ENCODE measurements at regions of chr5 and their contacts with region 1.

Region 1: GRCh38 chr5:180810210-180810958 is 7.8 kb upstream of the MGAT1 start:
- DNase-seq: peak; percentile 88
- ATAC-seq: peak; percentile 83
- H3K4me3 ChIP-seq: peak overlapping the region; percentile 97
- H3K27ac ChIP-seq: peak overlapping the region; percentile 95
- H3K4me1 ChIP-seq: peaks cover 31% of the 10 kb centered on the region
- H3K27me3 ChIP-seq: no peaks in the 10 kb centered on the region
- CTCF ChIP-seq: no peak
- EP300 ChIP-seq: no peak
- POLR2A ChIP-seq: peak; percentile 94
- RAD21 ChIP-seq: no peak

Region 2: GRCh38 chr5:179821581-179822432 is 988.6 kb before region 1 on chr5:
- CTCF ChIA-PET with region 1: no interaction called
- POLR2A ChIA-PET with region 1: no interaction called
- RAD21 ChIA-PET with region 1: no interaction called
- SMC1A ChIA-PET with region 1: no interaction called
- in situ Hi-C with region 1: loop called (anchors 25 kb)
- intact Hi-C with region 1: no loop called
- DNase-seq: no peak
- ATAC-seq: peak; percentile 74
- H3K4me3 ChIP-seq: peak overlapping the region; percentile 93
- H3K27ac ChIP-seq: peak overlapping the region; percentile 96
- H3K4me1 ChIP-seq: peaks cover 35% of the 10 kb centered on the region
- H3K27me3 ChIP-seq: no peaks in the 10 kb centered on the region
- CTCF ChIP-seq: no peak
- EP300 ChIP-seq: no peak
- POLR2A ChIP-seq: peak; percentile 73
- RAD21 ChIP-seq: no peak

Region 3: DNA sequence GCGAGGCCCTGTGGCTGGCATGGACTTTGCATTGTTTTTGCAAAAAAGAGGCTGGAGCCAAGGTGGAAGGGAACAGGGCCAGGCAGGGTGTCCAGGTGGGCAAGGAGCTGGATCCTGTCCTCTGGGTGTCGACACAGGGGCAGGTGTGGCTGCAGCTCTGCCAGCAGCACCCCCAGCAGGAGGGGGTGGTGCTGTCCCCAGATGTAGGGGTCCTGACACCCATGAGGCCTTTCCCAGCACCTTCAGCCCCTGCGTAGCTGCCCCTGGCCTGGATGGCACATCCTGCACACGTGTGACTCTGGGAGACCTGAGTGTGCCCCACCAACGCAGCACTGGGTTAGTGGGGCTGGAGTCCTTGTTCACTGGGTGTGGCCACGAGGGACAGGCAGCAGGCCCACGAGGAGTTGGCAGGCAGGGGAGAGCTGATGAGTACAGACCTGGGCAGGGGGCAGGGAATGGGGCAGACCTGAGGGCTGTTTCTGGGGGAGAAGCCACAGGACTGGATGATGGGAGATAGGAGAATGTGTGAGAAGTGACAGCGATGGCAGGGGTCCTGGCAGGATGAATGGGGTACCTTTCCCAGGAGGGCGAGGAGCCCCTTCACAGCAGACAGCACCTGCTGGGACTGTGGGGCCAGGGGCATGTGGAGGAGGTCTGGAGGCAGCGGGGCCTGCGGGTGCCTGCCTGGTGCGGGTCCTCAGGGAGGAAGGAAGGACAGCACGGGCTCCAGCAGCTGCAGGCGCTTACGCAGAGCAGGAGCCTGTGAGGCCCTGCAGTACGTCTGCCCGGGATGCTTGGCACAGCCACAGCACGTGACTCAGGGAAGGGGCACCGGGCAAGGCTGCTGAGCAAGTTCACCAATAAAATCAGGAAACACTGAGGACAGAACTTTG is 597.8 kb before region 1 on chr5:
- CTCF ChIA-PET with region 1: no interaction called
- POLR2A ChIA-PET with region 1: no interaction called
- RAD21 ChIA-PET with region 1: no interaction called
- SMC1A ChIA-PET with region 1: no interaction called
- in situ Hi-C with region 1: no loop called
- intact Hi-C with region 1: no loop called
- DNase-seq: no peak
- ATAC-seq: no peak
- H3K4me3 ChIP-seq: no peak overlapping the region
- H3K27ac ChIP-seq: no peak overlapping the region
- H3K4me1 ChIP-seq: no peaks in the 10 kb centered on the region
- H3K27me3 ChIP-seq: peaks cover 0 to 5% of the 10 kb centered on the region in 2 experiments; a peak in 2 of 4 replicates
- CTCF ChIP-seq: no peak
- EP300 ChIP-seq: no peak
- POLR2A ChIP-seq: no peak
- RAD21 ChIP-seq: no peak

Region 4: GRCh38 chr5:180776376-180776775 is 34.0 kb before region 1 on chr5:
- CTCF ChIA-PET with region 1: no interaction called
- POLR2A ChIA-PET with region 1: no interaction called
- RAD21 ChIA-PET with region 1: no interaction called
- SMC1A ChIA-PET with region 1: no interaction called
- in situ Hi-C with region 1: no loop called
- intact Hi-C with region 1: no loop called
- DNase-seq: no peak
- ATAC-seq: no peak
- H3K4me3 ChIP-seq: no peak overlapping the region
- H3K27ac ChIP-seq: no peak overlapping the region
- H3K4me1 ChIP-seq: no peaks in the 10 kb centered on the region
- H3K27me3 ChIP-seq: no peaks in the 10 kb centered on the region
- CTCF ChIP-seq: no peak
- EP300 ChIP-seq: no peak
- POLR2A ChIP-seq: no peak
- RAD21 ChIP-seq: no peak

Region 5: DNA sequence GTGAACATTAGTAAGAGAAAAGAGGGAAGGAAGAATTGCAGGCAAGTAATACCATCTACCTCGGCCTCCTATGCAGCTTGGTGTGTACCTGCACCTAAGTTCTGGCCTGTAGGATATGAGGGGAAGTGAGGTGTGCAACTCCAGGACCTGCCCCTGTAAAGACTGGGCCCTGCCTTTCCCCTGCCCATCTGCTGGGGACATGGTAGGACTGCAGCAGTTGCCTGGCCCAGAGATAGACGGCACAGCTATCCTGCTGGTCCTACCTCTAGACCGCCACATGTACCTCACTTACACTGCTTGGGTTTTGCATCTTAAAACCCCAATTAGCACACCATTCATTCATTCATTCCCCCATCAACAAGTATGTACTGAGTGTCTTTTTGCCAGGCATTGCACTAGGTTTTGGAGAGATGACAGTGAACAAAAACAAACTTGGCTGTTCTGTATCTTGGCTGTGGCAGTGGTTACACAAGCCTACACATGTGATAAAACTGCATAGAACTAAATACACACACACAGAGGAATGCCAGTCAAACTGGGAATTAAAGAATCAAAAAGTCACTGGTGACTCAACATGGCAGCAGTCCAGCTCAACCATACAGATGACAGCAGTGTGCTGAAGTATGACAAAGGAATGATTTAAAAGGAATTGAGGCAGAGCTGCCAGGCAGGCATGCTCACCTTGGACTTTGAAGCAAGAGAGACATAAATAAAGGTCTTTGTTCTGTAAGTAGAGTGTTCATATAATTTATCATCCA is 15.6 kb after region 1 on chr5:
- CTCF ChIA-PET with region 1: interaction called, 14 read pairs
- POLR2A ChIA-PET with region 1: interaction called, 41 read pairs
- RAD21 ChIA-PET with region 1: interaction called, 70 read pairs
- SMC1A ChIA-PET with region 1: interaction called, 28 read pairs
- in situ Hi-C with region 1: no loop called
- intact Hi-C with region 1: loop called (anchors 2 kb)
- DNase-seq: no peak
- ATAC-seq: no peak
- H3K4me3 ChIP-seq: no peak overlapping the region
- H3K27ac ChIP-seq: no peak overlapping the region
- H3K4me1 ChIP-seq: peaks cover 12% of the 10 kb centered on the region
- H3K27me3 ChIP-seq: no peaks in the 10 kb centered on the region
- CTCF ChIP-seq: no peak
- EP300 ChIP-seq: no peak
- POLR2A ChIP-seq: no peak
- RAD21 ChIP-seq: no peak

Region 6: GRCh38 chr5:180831139-180832048 is 21.0 kb after region 1 on chr5:
- CTCF ChIA-PET with region 1: interaction called, 14 read pairs
- POLR2A ChIA-PET with region 1: interaction called, 41 read pairs
- RAD21 ChIA-PET with region 1: interaction called, 70 read pairs
- SMC1A ChIA-PET with region 1: interaction called, 28 read pairs
- in situ Hi-C with region 1: no loop called
- intact Hi-C with region 1: loop called (anchors 2 kb)
- DNase-seq: no peak
- ATAC-seq: peak; percentile 90
- H3K4me3 ChIP-seq: peak overlapping the region; percentile 89
- H3K27ac ChIP-seq: peak overlapping the region; percentile 96
- H3K4me1 ChIP-seq: peaks cover 12% of the 10 kb centered on the region; the same call in 1 of the 2 replicates
- H3K27me3 ChIP-seq: no peaks in the 10 kb centered on the region
- CTCF ChIP-seq: 0 out of 6 replicates have a peak, but pooled peaks of 1 of the 3 experiments have one; percentile 5
- EP300 ChIP-seq: no peak
- POLR2A ChIP-seq: peak; percentile 67
- RAD21 ChIP-seq: no peak

Region 7: GRCh38 chr5:181173420-181174342 is 363.3 kb after region 1 on chr5:
- CTCF ChIA-PET with region 1: interaction called, 4 read pairs
- POLR2A ChIA-PET with region 1: interaction called, 3 read pairs
- RAD21 ChIA-PET with region 1: interaction called, 4 read pairs
- SMC1A ChIA-PET with region 1: no interaction called
- in situ Hi-C with region 1: no loop called
- intact Hi-C with region 1: loop called (anchors 5 kb)
- DNase-seq: peak; percentile 84
- ATAC-seq: peak; percentile 77
- H3K4me3 ChIP-seq: peak overlapping the region; percentile 66
- H3K27ac ChIP-seq: peak overlapping the region; percentile 53
- H3K4me1 ChIP-seq: peaks cover 20% of the 10 kb centered on the region
- H3K27me3 ChIP-seq: no peaks in the 10 kb centered on the region
- CTCF ChIP-seq: no peak
- EP300 ChIP-seq: no peak
- POLR2A ChIP-seq: no peak
- RAD21 ChIP-seq: no peak

Measured in GM12878 (cell line).